ENCODE measurements at regions of chr17 and their contacts with region 1.

Region 1: GRCh38 chr17:50904521-50905459 is 38.6 kb upstream of the TOB1 start:
- DNase-seq: no peak
- ATAC-seq: no peak
- H3K4me3 Mint-ChIP-seq: peak overlapping the region in 5 of 10 donors; percentile 3 to 66 (median 49)
- H3K27ac Mint-ChIP-seq: peak overlapping the region; percentile 67 to 92 (median 86)
- H3K4me1 Mint-ChIP-seq: peaks cover 50 to 72% (median 70%) of the 10 kb centered on the region in 4 donors
- H3K27me3 Mint-ChIP-seq: no peaks in the 10 kb centered on the region

Region 2: DNA sequence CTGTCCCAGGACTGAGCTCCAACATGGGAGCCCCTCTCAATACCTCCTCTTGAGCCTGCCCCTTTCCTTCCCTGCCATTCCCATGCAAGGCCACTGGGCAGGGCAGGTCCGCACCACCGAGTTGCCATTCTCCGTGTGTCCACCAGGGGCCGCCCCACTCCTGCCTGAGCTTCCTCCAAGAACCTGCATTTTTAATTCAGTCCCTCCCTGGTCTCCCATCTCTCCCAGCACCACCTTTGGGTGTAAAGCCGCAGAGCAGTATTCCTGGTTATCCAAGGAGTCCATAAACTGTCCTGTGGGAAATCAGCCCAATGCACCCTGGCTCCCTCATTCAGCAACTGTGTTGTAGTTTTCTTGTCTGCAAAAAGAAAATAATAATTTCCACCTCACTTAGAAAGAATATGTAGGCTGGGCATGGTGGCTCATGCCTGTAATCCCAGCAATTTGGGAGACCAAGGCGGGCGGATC is 121.6 kb before region 1 on chr17:
- POLR2A ChIA-PET with region 1: no interaction called
- DNase-seq: peak; percentile 61 to 85 (median 75)
- ATAC-seq: peak; percentile 63 to 74
- H3K4me3 Mint-ChIP-seq: peak overlapping the region in 5 of 10 donors; percentile 22 to 65 (median 49)
- H3K27ac Mint-ChIP-seq: peak overlapping the region in 3 of 10 donors; percentile 2 to 49 (median 21)
- H3K4me1 Mint-ChIP-seq: peaks cover 11 to 34% (median 26%) of the 10 kb centered on the region in 4 donors
- H3K27me3 Mint-ChIP-seq: peaks cover 0 to 5% (median 3%) of the 10 kb centered on the region in 5 donors

Region 3: DNA sequence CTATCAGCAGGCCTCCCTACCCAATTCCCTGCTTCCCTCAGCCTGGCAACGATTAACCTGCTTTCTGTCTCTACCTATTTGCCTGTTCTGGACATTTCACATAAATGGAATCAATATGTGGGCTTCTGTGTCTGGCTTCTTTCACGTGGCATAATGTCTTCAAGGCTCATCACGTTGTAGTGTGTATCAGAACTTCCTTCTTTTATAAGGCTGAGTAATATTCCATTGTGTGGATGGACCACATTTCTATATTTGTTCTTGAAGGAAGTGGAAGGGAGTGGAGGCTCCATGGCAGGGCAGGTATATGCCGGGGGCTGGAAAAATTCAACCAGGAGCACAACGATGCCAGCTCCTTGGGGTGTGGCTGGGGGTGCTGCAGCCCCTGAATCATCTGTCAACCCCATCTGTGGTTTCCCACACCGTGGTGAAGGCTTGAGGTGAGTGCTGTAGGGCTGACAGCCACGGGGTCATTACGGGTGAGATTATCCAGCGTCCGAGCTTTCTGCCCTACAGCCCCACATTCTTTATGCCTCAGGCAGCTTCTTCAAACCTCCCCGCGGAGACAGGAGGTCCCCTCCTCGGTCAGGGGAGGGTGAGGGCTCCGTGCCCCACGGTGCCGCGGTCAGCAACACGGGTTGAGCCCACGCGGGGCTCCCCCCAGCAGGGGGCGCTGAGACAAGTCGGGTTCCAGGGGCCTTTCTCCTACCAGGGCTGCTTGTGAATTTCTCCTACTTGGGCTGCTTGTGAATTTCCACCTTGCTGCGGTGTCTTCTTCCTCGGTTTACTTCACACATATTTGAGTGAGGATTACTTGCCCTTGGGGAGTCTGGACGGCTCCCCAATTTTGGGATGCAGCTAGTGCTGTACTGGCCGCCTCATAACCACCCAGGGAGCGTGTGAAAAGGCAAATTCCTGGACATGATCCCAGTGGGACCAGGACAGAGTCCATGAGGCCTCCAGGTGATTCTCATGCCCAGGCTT is 87.7 kb before region 1 on chr17:
- POLR2A ChIA-PET with region 1: no interaction called
- DNase-seq: peak; percentile 29 to 78 (median 59)
- ATAC-seq: peak; percentile 85 to 96
- H3K4me3 Mint-ChIP-seq: peak overlapping the region in 4 of 10 donors; percentile 5 to 27 (median 21)
- H3K27ac Mint-ChIP-seq: peak overlapping the region in 1 of 10 donors; percentile 14
- H3K4me1 Mint-ChIP-seq: peaks cover 0 to 6% (median 3%) of the 10 kb centered on the region in 4 donors
- H3K27me3 Mint-ChIP-seq: peaks cover 0 to 11% (median 9%) of the 10 kb centered on the region in 5 donors

Region 4: DNA sequence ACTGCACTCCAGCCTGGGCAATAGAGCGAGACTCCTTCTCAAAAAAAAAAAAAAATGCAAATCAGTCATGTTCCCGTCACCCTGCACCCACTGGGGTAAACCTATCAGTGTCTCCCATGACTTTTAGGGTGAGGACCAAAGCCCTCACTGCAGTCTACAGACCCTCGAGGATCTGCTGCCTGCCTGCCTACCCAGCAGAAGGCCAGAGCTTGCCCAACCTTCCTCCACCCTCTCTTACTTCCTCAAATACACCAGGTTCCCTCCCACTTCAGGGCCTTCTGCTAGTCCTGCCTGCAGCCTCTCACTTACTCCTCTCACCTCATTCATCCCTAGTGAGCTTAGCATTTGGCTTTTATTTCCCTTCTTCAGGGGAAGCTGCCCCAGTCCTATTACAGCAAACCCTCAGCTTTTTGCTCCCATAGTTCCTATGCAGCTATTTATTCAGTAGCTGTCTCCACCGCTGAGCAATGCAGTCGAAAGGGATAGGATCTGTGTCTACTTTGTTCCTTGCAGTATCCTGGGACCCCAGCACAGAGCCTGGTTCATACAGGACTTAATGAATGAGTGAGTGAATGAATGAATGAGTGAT is 20.8 kb before region 1 on chr17:
- POLR2A ChIA-PET with region 1: interaction called, 10 read pairs
- DNase-seq: no peak
- ATAC-seq: peak in 1 of 2 donors; percentile 25
- H3K4me3 Mint-ChIP-seq: peak overlapping the region in 1 of 10 donors; percentile 31
- H3K27ac Mint-ChIP-seq: peak overlapping the region in 9 of 10 donors; percentile 19 to 92 (median 76)
- H3K4me1 Mint-ChIP-seq: peaks cover 21 to 46% (median 35%) of the 10 kb centered on the region in 4 donors
- H3K27me3 Mint-ChIP-seq: no peaks in the 10 kb centered on the region

Region 5: GRCh38 chr17:50919321-50920085 is 14.7 kb after region 1 on chr17:
- POLR2A ChIA-PET with region 1: interaction called, 41 read pairs
- DNase-seq: peak; percentile 62 to 98 (median 90)
- ATAC-seq: peak; percentile 89 to 90
- H3K4me3 Mint-ChIP-seq: peak overlapping the region; percentile 66 to 92 (median 82)
- H3K27ac Mint-ChIP-seq: peak overlapping the region; percentile 97 to 100 (median 99)
- H3K4me1 Mint-ChIP-seq: peaks cover 31 to 71% (median 60%) of the 10 kb centered on the region in 4 donors
- H3K27me3 Mint-ChIP-seq: no peaks in the 10 kb centered on the region

Region 6: DNA sequence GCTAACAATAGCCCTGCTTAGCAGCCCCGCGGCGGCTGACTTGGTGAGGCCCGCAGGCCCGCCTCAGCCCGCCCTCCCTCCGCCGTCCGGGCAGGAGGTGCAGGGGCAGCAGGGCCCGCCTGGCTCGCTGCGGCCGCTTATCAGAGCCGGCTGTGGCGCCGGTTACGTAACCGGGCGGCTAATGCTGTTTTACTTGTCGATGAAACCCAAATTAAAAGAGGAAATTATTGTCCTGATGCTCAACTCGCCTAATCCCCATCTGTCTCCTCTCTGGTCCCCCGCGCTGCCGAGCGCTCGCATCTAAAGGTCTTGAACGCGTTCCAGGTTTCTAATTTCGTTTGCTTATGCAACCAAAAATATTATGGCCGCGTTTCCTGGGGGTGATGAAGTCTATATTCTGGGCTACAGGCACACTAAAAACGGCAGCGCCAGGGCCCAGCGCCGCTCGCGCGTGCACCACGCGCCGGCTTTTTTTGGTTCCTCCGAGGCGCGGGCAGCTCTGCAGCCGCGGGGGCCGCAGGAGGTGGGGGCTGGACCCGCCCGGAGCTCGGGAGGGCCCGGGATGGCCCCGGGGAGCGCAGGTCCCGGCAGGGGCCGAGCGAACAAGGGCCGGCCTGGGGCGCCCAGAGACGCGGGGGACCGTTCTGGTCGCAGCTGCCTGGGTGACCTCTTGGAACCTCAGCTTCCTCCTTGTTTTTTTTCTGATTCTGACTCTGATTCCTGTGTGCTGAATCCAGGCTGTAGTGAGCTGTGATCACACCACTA is 26.5 kb after region 1 on chr17:
- POLR2A ChIA-PET with region 1: interaction called, 59 read pairs
- DNase-seq: peak; percentile 25 to 77 (median 56)
- ATAC-seq: peak; percentile 82 to 86
- H3K4me3 Mint-ChIP-seq: peak overlapping the region; percentile 80 to 98 (median 88)
- H3K27ac Mint-ChIP-seq: peak overlapping the region; percentile 94 to 99 (median 98)
- H3K4me1 Mint-ChIP-seq: peaks cover 27 to 56% (median 50%) of the 10 kb centered on the region in 4 donors
- H3K27me3 Mint-ChIP-seq: peaks cover 0 to 5% (median 0%) of the 10 kb centered on the region in 5 donors

Region 7: DNA sequence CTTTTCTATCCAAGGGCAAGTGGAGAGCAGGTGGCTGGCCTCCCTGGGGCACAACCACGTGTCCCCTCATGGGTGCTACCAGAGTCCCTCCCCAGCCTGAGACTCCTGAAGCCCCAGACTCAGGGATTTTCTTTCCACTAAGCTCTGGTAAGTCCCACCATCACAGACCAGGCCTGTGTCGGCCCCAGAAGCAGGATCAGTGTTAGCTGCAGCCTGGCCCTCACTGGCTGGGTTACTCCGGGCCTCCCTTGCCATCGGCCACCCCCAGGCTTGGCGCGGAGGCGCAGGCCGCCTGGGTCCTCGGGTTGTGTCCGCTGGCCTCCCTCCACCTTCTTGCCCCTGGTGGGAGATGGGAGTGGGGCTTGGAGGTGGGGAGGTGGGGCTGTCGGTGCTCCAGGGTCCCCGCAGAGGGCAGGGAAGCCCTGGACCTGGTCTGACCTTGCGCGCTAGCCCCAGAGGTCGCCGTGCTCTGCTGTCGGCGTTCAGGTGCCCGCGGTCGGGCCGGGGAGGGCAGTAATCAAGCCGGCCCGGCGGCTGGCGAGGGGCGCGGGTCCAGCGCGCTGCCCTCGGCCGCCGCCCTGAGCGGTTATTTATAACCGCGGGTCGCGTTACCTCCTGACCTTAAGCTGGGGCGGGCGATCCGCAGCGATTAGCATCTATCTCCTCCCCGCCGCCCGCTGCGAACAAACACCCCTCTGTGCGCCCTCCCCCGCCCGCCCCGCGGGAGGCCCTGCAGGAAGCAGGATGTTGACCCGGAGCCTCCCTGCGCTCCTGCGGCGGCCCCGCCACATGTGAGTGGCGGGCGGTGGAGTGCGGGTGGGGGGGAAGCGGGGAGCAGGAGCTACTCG is 39.5 kb after region 1 on chr17:
- POLR2A ChIA-PET with region 1: interaction called, 37 read pairs
- DNase-seq: peak; percentile 54 to 89 (median 74)
- ATAC-seq: peak; percentile 87
- H3K4me3 Mint-ChIP-seq: peak overlapping the region; percentile 77 to 89 (median 84)
- H3K27ac Mint-ChIP-seq: peak overlapping the region; percentile 91 to 96 (median 94)
- H3K4me1 Mint-ChIP-seq: peaks cover 31 to 62% (median 52%) of the 10 kb centered on the region in 4 donors
- H3K27me3 Mint-ChIP-seq: no peaks in the 10 kb centered on the region

Region 8: GRCh38 chr17:50949989-50950881 is 45.4 kb after region 1 on chr17:
- POLR2A ChIA-PET with region 1: interaction called, 37 read pairs
- DNase-seq: peak; percentile 34 to 84 (median 50)
- ATAC-seq: peak; percentile 92 to 95
- H3K4me3 Mint-ChIP-seq: peak overlapping the region in 3 of 10 donors; percentile 33 to 54 (median 45)
- H3K27ac Mint-ChIP-seq: peak overlapping the region in 9 of 10 donors; percentile 49 to 90 (median 70)
- H3K4me1 Mint-ChIP-seq: peaks cover 15 to 41% (median 36%) of the 10 kb centered on the region in 4 donors
- H3K27me3 Mint-ChIP-seq: no peaks in the 10 kb centered on the region